ENCODE measurements at regions of chr6 and their contacts with region 1.

Region 1: DNA sequence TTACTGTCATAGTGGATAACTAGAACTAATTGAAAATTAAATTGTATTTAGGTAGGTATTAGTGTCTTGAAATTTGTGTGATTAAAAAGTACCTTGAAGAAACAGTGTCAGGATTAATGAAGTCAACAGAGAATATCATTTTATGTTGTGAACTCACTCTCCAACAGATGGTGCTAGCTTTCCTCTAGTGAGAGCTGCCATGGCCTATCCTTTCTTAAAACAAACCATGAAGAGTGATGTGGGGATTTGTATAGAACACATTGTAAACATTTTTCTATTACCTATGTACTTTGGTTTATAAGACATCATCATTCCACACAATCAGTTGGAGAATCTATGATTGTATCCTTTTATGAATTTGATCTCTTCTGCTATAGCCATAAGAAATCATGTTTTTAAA is 4.8 kb upstream of the SRSF12 start:
- DNase-seq: no peak
- H3K4me3 ChIP-seq: no peak overlapping the region
- H3K27ac ChIP-seq: no peak overlapping the region
- H3K4me1 ChIP-seq: peaks cover 0 to 11% (median 7%) of the 10 kb centered on the region in 4 donors
- H3K27me3 ChIP-seq: no peaks in the 10 kb centered on the region
- CTCF ChIP-seq: peak; percentile 53 to 59 (median 55)
- EP300 ChIP-seq: no peak
- POLR2A ChIP-seq: no peak

Region 2: GRCh38 chr6:89208551-89208950 is 85.9 kb after region 1 on chr6:
- intact Hi-C with region 1: no loop called
- DNase-seq: peak; percentile 89
- H3K4me3 ChIP-seq: no peak overlapping the region
- H3K27ac ChIP-seq: no peak overlapping the region
- H3K4me1 ChIP-seq: no peaks in the 10 kb centered on the region
- H3K27me3 ChIP-seq: no peaks in the 10 kb centered on the region
- CTCF ChIP-seq: no peak
- EP300 ChIP-seq: no peak
- POLR2A ChIP-seq: no peak

Region 3: GRCh38 chr6:89242574-89243330 is 120.1 kb after region 1 on chr6:
- intact Hi-C with region 1: loop called (anchors 1 kb)
- DNase-seq: peak; percentile 66
- H3K4me3 ChIP-seq: no peak overlapping the region
- H3K27ac ChIP-seq: no peak overlapping the region
- H3K4me1 ChIP-seq: peaks cover 0 to 10% (median 3%) of the 10 kb centered on the region in 4 donors
- H3K27me3 ChIP-seq: no peaks in the 10 kb centered on the region
- CTCF ChIP-seq: peak; percentile 50 to 61 (median 55)
- EP300 ChIP-seq: no peak
- POLR2A ChIP-seq: no peak